CD8-positive, alpha-beta T cell (primary cell): ENCODE measurements at regions of chr18 and their contacts with region 1.

Region 1: DNA sequence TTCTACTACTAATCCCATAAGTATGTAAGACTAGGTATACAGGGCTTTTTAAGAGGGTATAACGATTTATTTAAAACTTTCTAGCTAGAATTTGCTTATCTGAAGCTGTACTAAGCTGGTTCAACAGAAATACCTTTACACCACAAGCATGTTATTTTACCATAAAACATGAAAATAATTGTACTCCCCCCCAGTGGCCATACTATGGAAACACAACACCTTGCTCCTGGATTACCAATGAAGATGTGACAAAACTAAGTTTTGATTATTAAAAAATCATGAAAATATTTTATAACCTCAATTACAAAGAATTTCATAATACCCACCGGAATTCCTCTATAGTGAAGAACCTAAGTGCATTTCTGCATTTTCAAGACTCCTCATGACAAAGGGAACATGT is 27.3 kb downstream of the LPIN2 start:
- DNase-seq: peak in 3 of 9 experiments; percentile 30 to 78 (median 67)
- ATAC-seq: peak; percentile 69
- H3K4me3 ChIP-seq: no peak overlapping the region
- H3K4me3 Mint-ChIP-seq: no peak overlapping the region
- H3K27ac ChIP-seq: no peak overlapping the region
- H3K27ac Mint-ChIP-seq: no peak overlapping the region
- H3K4me1 ChIP-seq: peaks cover 30% of the 10 kb centered on the region
- H3K4me1 Mint-ChIP-seq: peaks cover 52% of the 10 kb centered on the region
- H3K27me3 ChIP-seq: no peaks in the 10 kb centered on the region
- H3K27me3 Mint-ChIP-seq: no peaks in the 10 kb centered on the region
- CTCF ChIP-seq: peak; percentile 82

Region 2: GRCh38 chr18:2920546-2921343 is 64.9 kb before region 1 on chr18:
- CTCF ChIA-PET with region 1: interaction called, 17 read pairs
- POLR2A ChIA-PET with region 1: interaction called, 4 read pairs
- intact Hi-C with region 1: no loop called
- DNase-seq: no peak
- ATAC-seq: no peak
- H3K4me3 ChIP-seq: no peak overlapping the region
- H3K4me3 Mint-ChIP-seq: no peak overlapping the region
- H3K27ac ChIP-seq: no peak overlapping the region
- H3K27ac Mint-ChIP-seq: peak overlapping the region; percentile 18
- H3K4me1 ChIP-seq: peaks cover 12% of the 10 kb centered on the region
- H3K4me1 Mint-ChIP-seq: peaks cover 24% of the 10 kb centered on the region
- H3K27me3 ChIP-seq: no peaks in the 10 kb centered on the region
- H3K27me3 Mint-ChIP-seq: no peaks in the 10 kb centered on the region
- CTCF ChIP-seq: no peak

Region 3: GRCh38 chr18:2948038-2948437 is 37.6 kb before region 1 on chr18:
- CTCF ChIA-PET with region 1: interaction called, 62 read pairs
- POLR2A ChIA-PET with region 1: interaction called, 3 read pairs
- intact Hi-C with region 1: no loop called
- DNase-seq: peak in 1 of 9 experiments; percentile 38
- ATAC-seq: no peak
- H3K4me3 ChIP-seq: no peak overlapping the region
- H3K4me3 Mint-ChIP-seq: no peak overlapping the region
- H3K27ac ChIP-seq: no peak overlapping the region
- H3K27ac Mint-ChIP-seq: no peak overlapping the region
- H3K4me1 ChIP-seq: peaks cover 19% of the 10 kb centered on the region
- H3K4me1 Mint-ChIP-seq: peaks cover 47% of the 10 kb centered on the region
- H3K27me3 ChIP-seq: no peaks in the 10 kb centered on the region
- H3K27me3 Mint-ChIP-seq: no peaks in the 10 kb centered on the region
- CTCF ChIP-seq: no peak

Region 4: GRCh38 chr18:2971741-2972552 is 13.7 kb before region 1 on chr18:
- CTCF ChIA-PET with region 1: interaction called, 64 read pairs
- POLR2A ChIA-PET with region 1: interaction called, 26 read pairs
- intact Hi-C with region 1: loop called (anchors 1 to 2 kb)
- DNase-seq: peak; percentile 30 to 90 (median 72)
- ATAC-seq: peak; percentile 78
- H3K4me3 ChIP-seq: peak overlapping the region; percentile 41
- H3K4me3 Mint-ChIP-seq: peak overlapping the region; percentile 88
- H3K27ac ChIP-seq: peak overlapping the region; percentile 43 to 96
- H3K27ac Mint-ChIP-seq: peak overlapping the region; percentile 95
- H3K4me1 ChIP-seq: peaks cover 81% of the 10 kb centered on the region
- H3K4me1 Mint-ChIP-seq: peaks cover 91% of the 10 kb centered on the region
- H3K27me3 ChIP-seq: no peaks in the 10 kb centered on the region
- H3K27me3 Mint-ChIP-seq: no peaks in the 10 kb centered on the region
- CTCF ChIP-seq: no peak

Region 5: GRCh38 chr18:3129053-3129864 is 143.6 kb after region 1 on chr18:
- CTCF ChIA-PET with region 1: interaction called, 35 read pairs
- POLR2A ChIA-PET with region 1: no interaction called
- intact Hi-C with region 1: no loop called
- DNase-seq: peak; percentile 58 to 86 (median 77)
- ATAC-seq: peak; percentile 99
- H3K4me3 ChIP-seq: no peak overlapping the region
- H3K4me3 Mint-ChIP-seq: no peak overlapping the region
- H3K27ac ChIP-seq: no peak overlapping the region
- H3K27ac Mint-ChIP-seq: no peak overlapping the region
- H3K4me1 ChIP-seq: no peaks in the 10 kb centered on the region
- H3K4me1 Mint-ChIP-seq: peaks cover 9% of the 10 kb centered on the region
- H3K27me3 ChIP-seq: no peaks in the 10 kb centered on the region
- H3K27me3 Mint-ChIP-seq: no peaks in the 10 kb centered on the region
- CTCF ChIP-seq: peak; percentile 67

Region 6: GRCh38 chr18:3329471-3329870 is 343.8 kb after region 1 on chr18:
- CTCF ChIA-PET with region 1: no interaction called
- POLR2A ChIA-PET with region 1: no interaction called
- intact Hi-C with region 1: no loop called
- DNase-seq: no peak
- ATAC-seq: no peak
- H3K4me3 ChIP-seq: no peak overlapping the region
- H3K4me3 Mint-ChIP-seq: no peak overlapping the region
- H3K27ac ChIP-seq: no peak overlapping the region
- H3K27ac Mint-ChIP-seq: no peak overlapping the region
- H3K4me1 ChIP-seq: no peaks in the 10 kb centered on the region
- H3K4me1 Mint-ChIP-seq: no peaks in the 10 kb centered on the region
- H3K27me3 ChIP-seq: no peaks in the 10 kb centered on the region
- H3K27me3 Mint-ChIP-seq: peaks cover 9% of the 10 kb centered on the region
- CTCF ChIP-seq: no peak